ENCODE measurements at regions of chr16 and their contacts with region 1.

Region 1: GRCh38 chr16:3123986-3124886 is 10.6 kb upstream of the ZNF213 start:
- DNase-seq: peak; percentile 92 to 97 (median 96)
- ATAC-seq: peak; percentile 95
- H3K4me3 ChIP-seq: peak overlapping the region; percentile 90
- H3K4me3 Mint-ChIP-seq: peak overlapping the region; percentile 92 to 99 (median 96)
- H3K27ac ChIP-seq: peak overlapping the region; percentile 75
- H3K27ac Mint-ChIP-seq: peak overlapping the region; percentile 85 to 99 (median 97)
- H3K4me1 ChIP-seq: peaks cover 20 to 29% of the 10 kb centered on the region in 2 donors
- H3K4me1 Mint-ChIP-seq: peaks cover 16 to 51% (median 43%) of the 10 kb centered on the region in 7 donors
- H3K27me3 ChIP-seq: no peaks in the 10 kb centered on the region
- H3K27me3 Mint-ChIP-seq: no peaks in the 10 kb centered on the region

Region 2: DNA sequence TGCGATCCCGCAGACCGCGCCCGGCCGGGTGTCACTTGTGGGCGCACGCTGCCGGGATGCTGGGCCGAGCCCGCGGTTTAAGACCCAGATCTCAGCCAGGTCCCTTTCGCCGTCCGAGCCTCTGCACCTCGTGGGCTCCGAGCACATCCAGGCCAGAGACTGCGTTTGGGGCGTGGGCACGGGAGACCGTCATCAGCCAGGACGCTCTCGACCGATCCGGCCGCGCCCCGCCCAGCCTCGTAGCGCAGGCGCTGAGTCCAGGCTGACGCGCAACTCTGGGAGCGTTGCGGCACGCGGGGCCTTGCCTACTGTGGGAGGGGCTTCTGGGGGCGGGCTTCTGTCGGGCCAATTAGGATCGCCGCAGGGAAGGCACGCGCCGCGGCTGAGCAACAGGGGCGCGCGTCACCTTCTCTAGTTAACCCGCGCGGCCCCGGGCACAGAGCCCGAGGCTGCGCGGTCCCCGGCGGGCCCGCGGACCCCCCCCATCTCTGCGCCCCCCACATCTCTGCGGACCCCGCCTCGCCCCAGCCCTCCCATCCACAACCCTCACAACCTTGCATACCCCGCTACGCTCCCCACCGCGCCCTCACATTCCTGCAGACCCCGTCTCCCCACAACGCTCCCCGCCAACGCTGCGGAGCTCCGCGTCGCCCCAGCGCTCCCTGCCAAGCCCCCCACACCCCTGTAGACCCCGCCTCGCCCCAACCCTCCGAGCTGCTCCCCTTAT is 592.3 kb before region 1 on chr16:
- CTCF ChIA-PET with region 1: no interaction called
- POLR2A ChIA-PET with region 1: no interaction called
- intact Hi-C with region 1: no loop called
- DNase-seq: peak; percentile 94 to 97 (median 96)
- ATAC-seq: peak; percentile 93
- H3K4me3 ChIP-seq: peak overlapping the region; percentile 71
- H3K4me3 Mint-ChIP-seq: peak overlapping the region; percentile 84 to 100 (median 96)
- H3K27ac ChIP-seq: peak overlapping the region; percentile 93
- H3K27ac Mint-ChIP-seq: peak overlapping the region; percentile 96 to 100 (median 98)
- H3K4me1 ChIP-seq: peaks cover 5 to 7% of the 10 kb centered on the region in 2 donors
- H3K4me1 Mint-ChIP-seq: peaks cover 0 to 31% (median 20%) of the 10 kb centered on the region in 7 donors
- H3K27me3 ChIP-seq: no peaks in the 10 kb centered on the region
- H3K27me3 Mint-ChIP-seq: no peaks in the 10 kb centered on the region

Region 3: DNA sequence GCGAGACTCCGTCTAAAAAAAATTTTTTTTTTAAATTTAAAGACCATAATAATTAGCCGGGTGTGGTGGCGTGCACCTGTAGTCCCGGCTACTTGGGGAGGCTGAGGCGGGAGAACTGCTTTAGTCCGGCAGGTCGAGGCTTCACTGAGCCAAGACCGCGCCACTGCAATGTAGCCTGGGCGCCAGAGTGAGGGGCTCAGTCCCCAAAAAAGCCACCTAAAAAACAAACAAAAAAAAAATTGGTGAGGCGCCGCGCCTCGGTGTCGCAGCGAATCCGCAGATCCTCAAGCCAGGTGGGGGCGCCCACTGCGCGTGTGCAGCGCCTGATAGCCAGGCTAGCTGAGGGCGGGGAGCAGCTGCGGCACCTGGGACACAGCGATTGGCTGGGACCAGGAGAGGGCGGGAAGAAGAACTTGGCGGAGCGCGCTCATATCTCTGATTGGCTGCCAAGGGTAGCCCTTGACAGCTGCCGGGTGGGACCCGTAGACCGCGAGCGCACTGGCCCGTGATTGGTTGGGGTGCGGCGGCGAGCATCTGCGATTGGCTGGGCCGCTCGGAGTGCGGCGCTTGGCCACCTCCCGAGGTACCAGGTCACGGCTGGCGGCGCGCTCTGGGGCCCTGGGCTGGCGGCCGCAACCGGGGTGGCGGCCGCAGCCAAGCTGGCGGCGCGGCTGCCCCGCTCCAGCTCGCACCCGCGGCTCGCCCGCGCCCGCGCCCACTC is 120.5 kb before region 1 on chr16:
- CTCF ChIA-PET with region 1: interaction called, 13 read pairs
- POLR2A ChIA-PET with region 1: interaction called, 11 read pairs
- intact Hi-C with region 1: loop called in 1 of 2 experiments (anchors 1 kb)
- DNase-seq: peak; percentile 78 to 98 (median 96)
- ATAC-seq: peak; percentile 99
- H3K4me3 ChIP-seq: no peak overlapping the region
- H3K4me3 Mint-ChIP-seq: peak overlapping the region; percentile 76 to 82 (median 80)
- H3K27ac ChIP-seq: no peak overlapping the region
- H3K27ac Mint-ChIP-seq: peak overlapping the region in 5 of 9 donors; percentile 41 to 81 (median 45)
- H3K4me1 ChIP-seq: peaks cover 19 to 21% of the 10 kb centered on the region in 2 donors
- H3K4me1 Mint-ChIP-seq: peaks cover 18 to 32% (median 25%) of the 10 kb centered on the region in 7 donors
- H3K27me3 ChIP-seq: no peaks in the 10 kb centered on the region
- H3K27me3 Mint-ChIP-seq: peaks cover 0 to 17% (median 0%) of the 10 kb centered on the region in 5 donors

Region 4: DNA sequence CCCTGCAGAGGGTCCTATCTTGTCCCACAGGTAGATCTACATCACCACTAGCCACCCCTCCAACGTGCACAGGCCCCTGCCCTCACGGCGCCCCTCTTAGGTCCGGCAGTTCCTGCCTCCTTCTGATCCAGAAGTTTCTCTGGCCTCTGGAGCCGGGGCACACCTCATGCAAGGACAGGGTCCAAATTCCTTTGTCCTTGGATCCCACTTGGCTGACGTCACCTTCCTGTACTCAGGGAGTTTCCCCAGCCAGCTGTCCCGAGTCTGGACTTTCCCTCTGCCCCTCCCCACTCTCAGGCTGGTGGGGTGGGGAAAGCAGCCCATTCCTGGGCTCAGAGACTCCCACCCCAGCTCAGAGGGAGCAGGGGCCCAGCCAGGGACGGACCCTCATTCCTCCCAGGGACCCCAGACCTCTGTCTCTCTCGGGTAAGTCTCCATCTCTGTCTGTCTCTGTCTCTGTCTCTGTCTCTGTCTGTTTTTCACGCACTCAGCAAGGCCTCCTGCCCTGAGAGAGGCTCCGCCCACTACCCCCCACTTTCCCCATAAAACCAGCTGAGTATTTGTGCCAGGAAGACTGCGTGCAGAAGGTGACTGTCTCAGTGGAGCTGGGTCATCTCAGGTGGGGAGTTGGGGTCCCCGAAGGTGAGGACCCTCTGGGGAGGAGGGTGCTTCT is 59.0 kb before region 1 on chr16 and contains the start of gene IL32:
- CTCF ChIA-PET with region 1: interaction called, 244 read pairs
- POLR2A ChIA-PET with region 1: interaction called, 182 read pairs
- intact Hi-C with region 1: loop called in 1 of 2 experiments (anchors 1 kb)
- DNase-seq: peak in 8 of 9 donors; percentile 43 to 69 (median 64)
- ATAC-seq: peak; percentile 78
- H3K4me3 ChIP-seq: peak within 1 kb of the TSS; percentile 78
- H3K4me3 Mint-ChIP-seq: peak within 1 kb of the TSS; percentile 98 to 100 (median 99)
- H3K27ac ChIP-seq: peak within 1 kb of the TSS; percentile 88
- H3K27ac Mint-ChIP-seq: peak within 1 kb of the TSS; percentile 94 to 100 (median 98)
- H3K4me1 ChIP-seq: peaks cover 25 to 27% of the 10 kb centered on the region in 2 donors
- H3K4me1 Mint-ChIP-seq: peaks cover 46 to 65% (median 60%) of the 10 kb centered on the region in 7 donors
- H3K27me3 ChIP-seq: no peaks in the 10 kb centered on the region
- H3K27me3 Mint-ChIP-seq: no peaks in the 10 kb centered on the region
- total RNA-seq, gene IL32: 351 to 3,697 (median 587) TPM

Region 5: DNA sequence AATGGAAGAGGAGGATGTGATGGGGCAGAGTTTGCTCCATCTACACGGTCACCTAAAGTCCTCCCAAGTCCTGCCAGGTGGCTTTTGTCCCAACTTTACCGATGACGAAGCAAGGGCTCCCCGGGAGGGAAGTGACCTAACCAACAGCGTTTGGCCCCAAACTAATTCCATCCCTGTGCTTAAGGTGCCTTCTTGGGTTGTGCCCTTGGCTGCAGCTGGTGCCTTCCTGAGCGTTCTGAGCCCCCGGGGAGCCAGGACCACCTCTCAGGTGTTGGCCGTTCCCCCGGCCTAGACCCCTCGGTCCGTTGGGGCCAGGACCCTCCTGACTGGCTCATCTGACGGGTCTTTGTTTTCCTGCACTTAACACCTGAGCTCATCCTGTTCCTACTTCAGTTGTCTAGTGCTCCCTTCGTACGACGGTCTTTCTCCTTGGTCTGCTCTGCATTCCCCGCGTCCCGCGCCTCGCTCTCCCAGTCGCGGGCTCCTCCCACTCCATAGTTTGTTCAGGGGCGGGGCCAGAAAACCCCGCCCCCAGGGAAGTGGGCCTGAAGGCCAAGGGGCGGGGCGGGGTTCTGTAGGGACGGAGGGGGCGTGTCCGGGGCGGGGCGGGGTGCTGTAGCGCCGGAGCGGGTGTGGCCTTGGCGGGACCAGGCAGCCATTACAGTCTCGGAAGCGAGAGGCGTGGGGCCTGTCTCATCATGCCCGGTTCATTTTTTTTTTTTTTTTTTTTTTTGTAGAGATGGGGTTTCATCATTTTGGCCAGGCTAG is 24.3 kb before region 1 on chr16:
- CTCF ChIA-PET with region 1: interaction called, 233 read pairs
- POLR2A ChIA-PET with region 1: interaction called, 40 read pairs
- intact Hi-C with region 1: loop called (anchors 1 kb)
- DNase-seq: peak; percentile 67 to 94 (median 75)
- ATAC-seq: peak; percentile 94
- H3K4me3 ChIP-seq: peak overlapping the region; percentile 46
- H3K4me3 Mint-ChIP-seq: peak overlapping the region; percentile 71 to 98 (median 82)
- H3K27ac ChIP-seq: peak overlapping the region; percentile 35
- H3K27ac Mint-ChIP-seq: peak overlapping the region; percentile 74 to 93 (median 86)
- H3K4me1 ChIP-seq: peaks cover 25 to 31% of the 10 kb centered on the region in 2 donors
- H3K4me1 Mint-ChIP-seq: peaks cover 27 to 65% (median 54%) of the 10 kb centered on the region in 7 donors
- H3K27me3 ChIP-seq: no peaks in the 10 kb centered on the region
- H3K27me3 Mint-ChIP-seq: no peaks in the 10 kb centered on the region

Region 6: GRCh38 chr16:3188925-3189825 is 64.9 kb after region 1 on chr16:
- CTCF ChIA-PET with region 1: no interaction called
- POLR2A ChIA-PET with region 1: no interaction called
- intact Hi-C with region 1: no loop called
- DNase-seq: peak in 2 of 9 donors; percentile 32 to 53
- ATAC-seq: peak; percentile 44
- H3K4me3 ChIP-seq: peak overlapping the region; percentile 6
- H3K4me3 Mint-ChIP-seq: peak overlapping the region; percentile 64 to 86 (median 78)
- H3K27ac ChIP-seq: no peak overlapping the region
- H3K27ac Mint-ChIP-seq: peak overlapping the region in 7 of 9 donors; percentile 28 to 88 (median 72)
- H3K4me1 ChIP-seq: peaks cover 23 to 26% of the 10 kb centered on the region in 2 donors
- H3K4me1 Mint-ChIP-seq: peaks cover 31 to 49% (median 43%) of the 10 kb centered on the region in 7 donors
- H3K27me3 ChIP-seq: peaks cover 28 to 32% of the 10 kb centered on the region in 2 donors
- H3K27me3 Mint-ChIP-seq: peaks cover 65 to 74% (median 72%) of the 10 kb centered on the region in 5 donors

Region 7: DNA sequence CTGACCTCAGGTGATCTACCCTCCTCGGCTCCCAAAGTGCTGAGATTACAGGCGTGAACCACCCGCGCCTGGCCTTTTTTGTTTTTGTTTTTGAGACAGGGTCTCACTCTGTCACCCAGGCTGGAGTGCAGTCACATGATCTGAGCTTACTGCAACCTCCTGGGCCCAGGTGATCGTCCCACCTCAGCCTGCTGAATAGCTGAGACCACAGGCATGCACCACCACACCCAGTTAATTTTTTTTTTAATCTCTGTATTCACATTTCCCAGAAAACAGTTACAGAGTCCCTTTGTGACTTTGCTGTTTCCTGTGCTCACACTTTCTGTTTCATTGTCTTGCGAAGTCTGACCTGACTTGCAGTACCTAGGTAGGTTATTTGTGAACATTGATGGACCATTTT is 379.3 kb after region 1 on chr16:
- CTCF ChIA-PET with region 1: no interaction called
- POLR2A ChIA-PET with region 1: no interaction called
- intact Hi-C with region 1: loop called in 1 of 2 experiments (anchors 2 kb)
- DNase-seq: peak in 8 of 9 donors; percentile 50 to 81 (median 70)
- ATAC-seq: peak; percentile 49
- H3K4me3 ChIP-seq: peak overlapping the region; percentile 3
- H3K4me3 Mint-ChIP-seq: peak overlapping the region; percentile 76 to 94 (median 84)
- H3K27ac ChIP-seq: peak overlapping the region; percentile 92
- H3K27ac Mint-ChIP-seq: peak overlapping the region; percentile 90 to 98 (median 95)
- H3K4me1 ChIP-seq: peaks cover 40 to 47% of the 10 kb centered on the region in 2 donors
- H3K4me1 Mint-ChIP-seq: peaks cover 37 to 80% (median 67%) of the 10 kb centered on the region in 7 donors
- H3K27me3 ChIP-seq: no peaks in the 10 kb centered on the region
- H3K27me3 Mint-ChIP-seq: no peaks in the 10 kb centered on the region

Region 8: DNA sequence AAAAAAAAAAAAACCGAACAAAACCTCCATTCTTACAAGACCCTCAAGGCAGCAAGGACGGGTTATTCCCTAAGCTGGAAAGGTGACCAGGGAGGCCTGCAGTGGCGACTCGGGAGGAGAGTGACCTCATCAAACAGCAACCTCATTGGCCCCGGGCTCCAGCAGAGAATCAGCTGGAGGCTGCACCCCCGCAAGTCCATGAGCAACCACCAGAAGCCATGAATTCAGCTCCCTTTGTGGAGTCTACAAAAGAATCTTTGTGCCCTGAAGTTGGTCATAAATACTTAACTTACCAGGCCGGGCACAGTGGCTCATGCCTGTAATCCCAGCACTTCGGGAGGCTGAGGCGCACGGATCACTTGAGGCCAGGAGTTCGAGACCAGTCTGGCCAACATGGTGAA is 837.2 kb after region 1 on chr16:
- CTCF ChIA-PET with region 1: no interaction called
- POLR2A ChIA-PET with region 1: no interaction called
- intact Hi-C with region 1: no loop called
- DNase-seq: no peak
- ATAC-seq: no peak
- H3K4me3 ChIP-seq: no peak overlapping the region
- H3K4me3 Mint-ChIP-seq: peak overlapping the region in 7 of 10 donors; percentile 2 to 94 (median 74)
- H3K27ac ChIP-seq: no peak overlapping the region
- H3K27ac Mint-ChIP-seq: peak overlapping the region in 5 of 9 donors; percentile 66 to 98 (median 95)
- H3K4me1 ChIP-seq: peaks cover 15 to 23% of the 10 kb centered on the region in 2 donors
- H3K4me1 Mint-ChIP-seq: peaks cover 9 to 34% (median 24%) of the 10 kb centered on the region in 7 donors
- H3K27me3 ChIP-seq: peaks cover 0 to 2% of the 10 kb centered on the region in 2 donors
- H3K27me3 Mint-ChIP-seq: peaks cover 0 to 15% (median 5%) of the 10 kb centered on the region in 5 donors

Region 9: GRCh38 chr16:4214215-4214621 is 1090.0 kb after region 1 on chr16:
- CTCF ChIA-PET with region 1: no interaction called
- POLR2A ChIA-PET with region 1: no interaction called
- intact Hi-C with region 1: no loop called
- DNase-seq: no peak
- ATAC-seq: no peak
- H3K4me3 ChIP-seq: no peak overlapping the region
- H3K4me3 Mint-ChIP-seq: no peak overlapping the region
- H3K27ac ChIP-seq: no peak overlapping the region
- H3K27ac Mint-ChIP-seq: no peak overlapping the region
- H3K4me1 ChIP-seq: no peaks in the 10 kb centered on the region
- H3K4me1 Mint-ChIP-seq: no peaks in the 10 kb centered on the region
- H3K27me3 ChIP-seq: no peaks in the 10 kb centered on the region
- H3K27me3 Mint-ChIP-seq: peaks cover 0 to 10% (median 0%) of the 10 kb centered on the region in 5 donors